ENCODE measurements at regions of chr17 and their contacts with region 1.

Region 1: GRCh38 chr17:51682115-51682514 is 421.8 kb downstream of the UTP18 start:
- DNase-seq: no peak
- ATAC-seq: no peak
- H3K4me3 ChIP-seq: no peak overlapping the region
- H3K27ac ChIP-seq: no peak overlapping the region
- H3K4me1 ChIP-seq: no peaks in the 10 kb centered on the region
- H3K27me3 ChIP-seq: 0 out of 5 replicates have a peak, but pooled peaks cover 0 to 3% of the 10 kb centered on the region in 2 experiments
- CTCF ChIP-seq: no peak
- EP300 ChIP-seq: no peak
- POLR2A ChIP-seq: no peak
- RAD21 ChIP-seq: no peak

Region 2: GRCh38 chr17:51590066-51590656 is 92.0 kb before region 1 on chr17:
- CTCF ChIA-PET with region 1: no interaction called
- POLR2A ChIA-PET with region 1: no interaction called
- in situ Hi-C with region 1: no loop called
- intact Hi-C with region 1: no loop called
- DNase-seq: no peak
- ATAC-seq: no peak
- H3K4me3 ChIP-seq: no peak overlapping the region
- H3K27ac ChIP-seq: no peak overlapping the region
- H3K4me1 ChIP-seq: no peaks in the 10 kb centered on the region
- H3K27me3 ChIP-seq: no peaks in the 10 kb centered on the region
- CTCF ChIP-seq: no peak
- EP300 ChIP-seq: no peak
- POLR2A ChIP-seq: no peak
- RAD21 ChIP-seq: no peak

Region 3: DNA sequence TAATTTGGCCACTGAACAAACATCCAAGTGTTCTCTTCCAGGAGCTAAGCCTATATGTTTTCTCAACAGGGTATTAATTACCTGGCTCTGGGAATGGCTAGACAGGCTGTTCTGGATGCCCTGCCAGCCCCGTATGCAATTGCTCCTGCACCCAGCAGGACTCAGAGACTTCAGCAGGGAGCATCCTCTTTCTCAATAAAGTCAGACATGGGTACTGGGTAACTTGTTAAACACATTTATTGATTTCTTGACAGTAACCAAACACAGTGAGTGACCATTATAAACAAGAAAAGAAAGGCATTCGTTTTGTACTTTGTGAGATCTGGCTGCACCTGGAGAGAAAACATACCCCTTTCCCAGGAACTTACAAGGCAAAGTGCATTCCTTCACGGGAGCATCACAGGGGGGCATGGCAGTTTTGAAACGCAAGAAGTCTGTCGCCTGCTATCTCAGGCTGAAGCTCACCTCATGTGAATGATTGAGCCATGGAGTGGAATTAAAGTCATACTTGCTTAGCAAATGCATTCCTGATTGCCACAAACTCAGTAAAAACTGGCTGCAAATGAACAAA is 51.9 kb before region 1 on chr17:
- CTCF ChIA-PET with region 1: no interaction called
- POLR2A ChIA-PET with region 1: no interaction called
- in situ Hi-C with region 1: loop called (anchors 5 kb)
- intact Hi-C with region 1: no loop called
- DNase-seq: peak; percentile 21
- ATAC-seq: peak; percentile 97
- H3K4me3 ChIP-seq: no peak overlapping the region
- H3K27ac ChIP-seq: no peak overlapping the region
- H3K4me1 ChIP-seq: peaks cover 8% of the 10 kb centered on the region
- H3K27me3 ChIP-seq: no peaks in the 10 kb centered on the region
- CTCF ChIP-seq: no peak
- EP300 ChIP-seq: no peak
- POLR2A ChIP-seq: no peak
- RAD21 ChIP-seq: no peak

Region 4: GRCh38 chr17:51778842-51779241 is 96.7 kb after region 1 on chr17:
- CTCF ChIA-PET with region 1: no interaction called
- POLR2A ChIA-PET with region 1: no interaction called
- in situ Hi-C with region 1: no loop called
- intact Hi-C with region 1: no loop called
- DNase-seq: no peak
- ATAC-seq: no peak
- H3K4me3 ChIP-seq: no peak overlapping the region
- H3K27ac ChIP-seq: no peak overlapping the region
- H3K4me1 ChIP-seq: no peaks in the 10 kb centered on the region
- H3K27me3 ChIP-seq: no peaks in the 10 kb centered on the region
- CTCF ChIP-seq: no peak
- EP300 ChIP-seq: no peak
- POLR2A ChIP-seq: no peak
- RAD21 ChIP-seq: no peak

Region 5: GRCh38 chr17:52344895-52345294 is 662.8 kb after region 1 on chr17:
- CTCF ChIA-PET with region 1: no interaction called
- POLR2A ChIA-PET with region 1: no interaction called
- in situ Hi-C with region 1: no loop called
- intact Hi-C with region 1: no loop called
- DNase-seq: no peak
- ATAC-seq: no peak
- H3K4me3 ChIP-seq: no peak overlapping the region
- H3K27ac ChIP-seq: no peak overlapping the region
- H3K4me1 ChIP-seq: no peaks in the 10 kb centered on the region
- H3K27me3 ChIP-seq: no peaks in the 10 kb centered on the region
- CTCF ChIP-seq: no peak
- EP300 ChIP-seq: no peak
- POLR2A ChIP-seq: no peak
- RAD21 ChIP-seq: no peak

Measured in HepG2 (cell line).